OCI-LY7 (cell line): ENCODE measurements at regions of chr18 and their contacts with region 1.

Region 1: DNA sequence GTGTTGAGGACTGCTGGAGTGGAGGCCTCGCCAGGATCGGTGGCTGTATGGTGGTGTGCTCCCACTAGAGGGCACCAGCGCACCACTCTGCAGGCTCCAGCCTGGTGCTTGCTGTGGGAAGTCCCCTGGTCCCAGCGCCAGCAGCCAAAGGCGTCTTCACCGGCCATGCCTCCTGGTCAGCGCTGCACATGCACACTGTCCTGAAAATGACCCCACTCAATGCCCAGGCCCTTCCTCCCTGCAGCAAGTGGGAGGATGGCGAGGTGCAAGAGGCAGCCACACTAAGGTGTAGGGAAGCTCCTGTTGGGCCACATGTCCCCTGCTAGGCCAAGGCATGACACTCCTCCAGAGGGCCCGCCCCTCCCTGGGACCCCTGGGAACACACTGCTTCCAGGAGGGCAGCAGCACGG is 136.5 kb downstream of the CTIF start:
- DNase-seq: peak; percentile 75
- H3K4me3 ChIP-seq: no peak overlapping the region
- H3K27ac ChIP-seq: no peak overlapping the region
- H3K4me1 ChIP-seq: peaks cover 34% of the 10 kb centered on the region
- CTCF ChIP-seq: peak; percentile 77

Region 2: GRCh38 chr18:48728204-48728833 is 53.0 kb after region 1 on chr18:
- CTCF ChIA-PET with region 1: no interaction called
- POLR2A ChIA-PET with region 1: no interaction called
- intact Hi-C with region 1: no loop called
- DNase-seq: no peak
- H3K4me3 ChIP-seq: no peak overlapping the region
- H3K27ac ChIP-seq: no peak overlapping the region
- H3K4me1 ChIP-seq: no peaks in the 10 kb centered on the region
- CTCF ChIP-seq: no peak

Region 3: DNA sequence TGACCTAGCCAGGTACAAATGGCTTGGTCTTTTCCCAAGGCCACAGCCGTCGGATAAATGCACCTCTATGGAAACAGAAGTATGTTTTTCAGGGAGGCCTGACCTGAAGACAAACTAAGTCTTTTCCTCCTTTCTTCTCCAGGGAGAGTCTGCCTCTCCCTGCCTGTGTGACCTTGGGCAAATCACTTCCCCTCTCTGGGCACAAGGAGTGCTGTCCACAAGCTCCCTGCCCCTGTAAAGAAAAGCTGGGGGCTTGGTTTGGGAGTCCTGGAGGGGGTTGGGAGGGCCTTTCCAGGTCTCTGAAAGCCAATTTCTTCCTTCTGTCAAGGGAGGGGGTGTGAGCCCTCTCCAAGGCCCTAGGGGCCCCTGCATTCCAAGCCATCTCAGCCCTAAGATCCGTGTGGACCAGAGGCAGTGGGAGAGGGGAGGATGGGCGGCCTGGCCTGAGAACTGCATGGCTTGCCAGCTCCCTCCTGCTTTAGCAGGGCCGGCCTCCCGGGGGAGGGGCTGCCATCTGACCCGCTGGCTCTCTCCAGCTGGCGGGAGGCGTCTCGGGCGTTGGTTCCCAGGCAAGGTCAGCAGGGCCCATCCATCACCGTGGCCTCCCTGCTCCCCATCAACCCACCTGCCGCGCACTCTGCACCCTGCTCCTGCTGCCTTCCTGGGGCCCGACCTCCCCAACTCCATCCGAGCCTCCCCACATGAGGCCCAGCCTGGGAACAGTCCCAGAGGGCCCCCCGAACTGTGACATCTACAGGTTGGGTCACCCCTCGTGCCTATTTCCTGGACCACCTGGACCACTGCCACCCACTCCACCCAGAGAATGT is 214.0 kb after region 1 on chr18:
- CTCF ChIA-PET with region 1: no interaction called
- POLR2A ChIA-PET with region 1: no interaction called
- intact Hi-C with region 1: no loop called
- DNase-seq: no peak
- H3K4me3 ChIP-seq: no peak overlapping the region
- H3K27ac ChIP-seq: no peak overlapping the region
- H3K4me1 ChIP-seq: no peaks in the 10 kb centered on the region
- CTCF ChIP-seq: no peak

Region 4: GRCh38 chr18:48913201-48913600 is 237.8 kb after region 1 on chr18:
- CTCF ChIA-PET with region 1: no interaction called
- POLR2A ChIA-PET with region 1: no interaction called
- intact Hi-C with region 1: loop called (anchors 5 kb)
- DNase-seq: peak; percentile 48
- H3K4me3 ChIP-seq: no peak overlapping the region
- H3K27ac ChIP-seq: no peak overlapping the region
- H3K4me1 ChIP-seq: peaks cover 29% of the 10 kb centered on the region
- CTCF ChIP-seq: peak; percentile 57

Region 5: GRCh38 chr18:49161627-49162026 is 486.3 kb after region 1 on chr18:
- CTCF ChIA-PET with region 1: no interaction called
- POLR2A ChIA-PET with region 1: no interaction called
- intact Hi-C with region 1: no loop called
- DNase-seq: no peak
- H3K4me3 ChIP-seq: no peak overlapping the region
- H3K27ac ChIP-seq: no peak overlapping the region
- H3K4me1 ChIP-seq: peaks cover 22% of the 10 kb centered on the region
- CTCF ChIP-seq: no peak

Region 6: GRCh38 chr18:49178736-49179135 is 503.4 kb after region 1 on chr18:
- CTCF ChIA-PET with region 1: no interaction called
- POLR2A ChIA-PET with region 1: no interaction called
- intact Hi-C with region 1: loop called (anchors 2 kb)
- DNase-seq: peak; percentile 13
- H3K4me3 ChIP-seq: no peak overlapping the region
- H3K27ac ChIP-seq: no peak overlapping the region
- H3K4me1 ChIP-seq: peaks cover 46% of the 10 kb centered on the region
- CTCF ChIP-seq: peak; percentile 69

Region 7: GRCh38 chr18:49412679-49413078 is 737.3 kb after region 1 on chr18:
- CTCF ChIA-PET with region 1: no interaction called
- POLR2A ChIA-PET with region 1: no interaction called
- intact Hi-C with region 1: loop called (anchors 10 kb)
- DNase-seq: peak; percentile 4
- H3K4me3 ChIP-seq: no peak overlapping the region
- H3K27ac ChIP-seq: no peak overlapping the region
- H3K4me1 ChIP-seq: peaks cover 22% of the 10 kb centered on the region
- CTCF ChIP-seq: no peak